Heart right ventricle (tissue), 16 donors: ENCODE measurements at regions of chr5 and their contacts with region 1.

Region 1: GRCh38 chr5:109688971-109689739 is 572 bp upstream of the MAN2A1 start:
- DNase-seq: peak; percentile 85 to 90
- ATAC-seq: peak; percentile 95 to 99 (median 96)
- H3K4me3 ChIP-seq: peak overlapping the region; percentile 81 to 99 (median 94)
- H3K27ac ChIP-seq: peak overlapping the region; percentile 88 to 98 (median 96)
- H3K4me1 ChIP-seq: peaks cover 0 to 36% (median 19%) of the 10 kb centered on the region in 9 donors
- H3K27me3 ChIP-seq: no peaks in the 10 kb centered on the region
- CTCF ChIP-seq: peak in 3 of 9 donors; percentile 9 to 18 (median 14)

Region 2: DNA sequence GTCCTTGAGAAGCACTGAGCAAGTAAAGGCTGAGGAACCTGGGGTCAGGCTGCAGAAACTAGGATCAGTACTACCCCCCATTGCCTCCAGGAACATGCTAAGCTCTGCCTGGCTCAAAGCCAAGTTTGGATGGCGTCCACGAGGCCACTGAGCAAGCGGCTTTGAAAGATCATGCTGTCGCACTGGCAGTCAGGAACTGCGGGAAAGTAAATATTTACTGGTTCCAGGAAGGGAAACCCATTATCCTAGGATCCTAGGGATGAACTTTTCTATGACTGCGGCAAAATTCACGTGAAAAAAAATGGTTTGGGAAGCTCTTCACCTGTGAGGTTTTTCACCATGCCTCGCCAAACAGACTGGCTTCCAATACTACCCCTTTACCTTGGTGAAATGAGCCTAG is 204.1 kb before region 1 on chr5:
- intact Hi-C with region 1: loop called in 1 of 10 experiments (anchors 10 kb)
- DNase-seq: peak; percentile 61 to 71
- ATAC-seq: peak in 7 of 8 donors; percentile 67 to 88 (median 74)
- H3K4me3 ChIP-seq: no peak overlapping the region
- H3K27ac ChIP-seq: no peak overlapping the region
- H3K4me1 ChIP-seq: peaks cover 0 to 26% (median 14%) of the 10 kb centered on the region in 9 donors
- H3K27me3 ChIP-seq: no peaks in the 10 kb centered on the region
- CTCF ChIP-seq: no peak

Region 3: DNA sequence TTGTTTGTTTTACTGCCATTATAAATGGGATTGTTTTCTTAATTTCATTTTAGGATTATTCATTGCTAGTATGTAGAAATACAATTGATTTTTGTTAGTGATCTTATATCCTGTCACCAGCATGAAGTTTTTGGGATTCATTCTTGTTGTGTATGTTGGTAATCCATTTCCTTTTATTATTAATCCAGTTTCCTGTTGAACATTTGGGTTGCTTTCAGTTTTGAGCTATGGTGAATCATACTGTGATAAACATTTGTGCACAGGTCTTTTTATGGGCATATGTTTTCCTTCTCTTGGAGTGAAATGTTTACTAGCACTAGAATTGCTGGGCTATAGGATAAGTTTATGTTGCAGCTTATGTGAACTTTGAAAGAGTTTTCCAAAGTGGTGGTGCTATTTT is 70.2 kb after region 1 on chr5:
- intact Hi-C with region 1: loop called in 1 of 10 experiments (anchors 10 kb)
- DNase-seq: no peak
- ATAC-seq: no peak
- H3K4me3 ChIP-seq: no peak overlapping the region
- H3K27ac ChIP-seq: peak overlapping the region in 3 of 10 donors; percentile 11 to 55 (median 23)
- H3K4me1 ChIP-seq: peaks cover 0 to 15% (median 6%) of the 10 kb centered on the region in 9 donors
- H3K27me3 ChIP-seq: no peaks in the 10 kb centered on the region
- CTCF ChIP-seq: no peak

Region 4: GRCh38 chr5:109830955-109831502 is 141.9 kb after region 1 on chr5:
- intact Hi-C with region 1: loop called in 1 of 10 experiments (anchors 10 kb)
- DNase-seq: no peak
- ATAC-seq: no peak
- H3K4me3 ChIP-seq: no peak overlapping the region
- H3K27ac ChIP-seq: no peak overlapping the region
- H3K4me1 ChIP-seq: no peaks in the 10 kb centered on the region
- H3K27me3 ChIP-seq: no peaks in the 10 kb centered on the region
- CTCF ChIP-seq: no peak

Region 5: DNA sequence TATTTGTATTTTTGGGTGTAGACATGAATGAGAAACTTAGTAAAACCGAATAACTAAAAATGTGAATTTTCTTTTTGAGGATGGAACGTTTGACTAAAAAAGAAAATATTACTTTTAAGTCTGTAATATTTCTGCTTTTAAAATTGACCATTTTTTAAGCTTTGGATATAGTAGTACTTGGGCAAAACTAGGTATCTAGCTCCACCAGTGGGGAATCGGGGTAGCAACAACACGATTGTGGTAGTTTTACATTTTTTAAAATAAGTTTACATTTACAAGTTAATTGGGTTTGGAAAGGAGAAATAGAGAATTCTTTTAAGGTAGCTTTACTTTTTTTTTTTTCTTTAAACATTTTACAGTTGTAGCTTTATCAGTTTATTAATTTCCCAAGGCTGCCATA is 155.0 kb after region 1 on chr5:
- intact Hi-C with region 1: loop called in 3 of 10 experiments (anchors 10 kb)
- DNase-seq: no peak
- ATAC-seq: no peak
- H3K4me3 ChIP-seq: no peak overlapping the region
- H3K27ac ChIP-seq: no peak overlapping the region
- H3K4me1 ChIP-seq: no peaks in the 10 kb centered on the region
- H3K27me3 ChIP-seq: no peaks in the 10 kb centered on the region
- CTCF ChIP-seq: peak in 6 of 9 donors; percentile 11 to 45 (median 32)

Region 6: GRCh38 chr5:110625376-110625999 is 936.3 kb after region 1 on chr5:
- intact Hi-C with region 1: loop called in 2 of 10 experiments (anchors 10 kb)
- DNase-seq: no peak
- ATAC-seq: no peak
- H3K4me3 ChIP-seq: no peak overlapping the region
- H3K27ac ChIP-seq: no peak overlapping the region
- H3K4me1 ChIP-seq: no peaks in the 10 kb centered on the region
- H3K27me3 ChIP-seq: no peaks in the 10 kb centered on the region
- CTCF ChIP-seq: peak; percentile 23 to 66 (median 55)